SK-N-SH (cell line): ENCODE measurements at regions of chr3 and their contacts with region 1.

Region 1: GRCh38 chr3:146189519-146190173 is 28.7 kb upstream of the PLOD2 start:
- DNase-seq: peak; percentile 40
- H3K4me3 ChIP-seq: no peak overlapping the region
- H3K27ac ChIP-seq: no peak overlapping the region
- H3K4me1 ChIP-seq: no peaks in the 10 kb centered on the region
- H3K27me3 ChIP-seq: no peaks in the 10 kb centered on the region
- CTCF ChIP-seq: peak; percentile 79
- EP300 ChIP-seq: no peak
- RAD21 ChIP-seq: peak; percentile 60

Region 2: GRCh38 chr3:146177519-146177918 is 12.1 kb before region 1 on chr3:
- CTCF ChIA-PET with region 1: interaction called, 13 read pairs
- POLR2A ChIA-PET with region 1: no interaction called
- DNase-seq: no peak
- H3K4me3 ChIP-seq: no peak overlapping the region
- H3K27ac ChIP-seq: no peak overlapping the region
- H3K4me1 ChIP-seq: no peaks in the 10 kb centered on the region
- H3K27me3 ChIP-seq: no peaks in the 10 kb centered on the region; the same call in 1 of the 2 replicates
- CTCF ChIP-seq: no peak
- EP300 ChIP-seq: no peak
- RAD21 ChIP-seq: no peak

Region 3: DNA sequence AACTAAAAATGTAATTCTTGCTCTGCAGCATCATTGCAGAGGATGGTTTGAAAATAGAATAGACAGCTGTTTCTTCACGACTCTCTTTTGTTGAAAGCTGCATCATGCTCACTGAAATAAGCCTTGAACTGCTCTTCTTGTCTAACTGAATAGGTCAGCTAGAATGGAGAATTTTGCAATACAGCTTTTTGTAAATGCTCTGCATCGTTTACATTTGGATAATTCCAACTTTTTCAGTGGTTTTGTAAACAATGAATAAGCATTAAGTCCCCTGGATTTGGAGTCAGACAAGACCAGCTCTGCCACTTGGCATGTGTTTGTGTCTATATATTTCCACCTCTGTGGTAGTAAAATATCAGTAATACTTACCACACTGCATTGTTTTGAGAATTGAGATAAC is 184.5 kb after region 1 on chr3:
- CTCF ChIA-PET with region 1: no interaction called
- POLR2A ChIA-PET with region 1: no interaction called
- DNase-seq: no peak
- H3K4me3 ChIP-seq: no peak overlapping the region
- H3K27ac ChIP-seq: no peak overlapping the region
- H3K4me1 ChIP-seq: no peaks in the 10 kb centered on the region
- H3K27me3 ChIP-seq: no peaks in the 10 kb centered on the region
- CTCF ChIP-seq: no peak
- EP300 ChIP-seq: no peak
- RAD21 ChIP-seq: no peak

Region 4: DNA sequence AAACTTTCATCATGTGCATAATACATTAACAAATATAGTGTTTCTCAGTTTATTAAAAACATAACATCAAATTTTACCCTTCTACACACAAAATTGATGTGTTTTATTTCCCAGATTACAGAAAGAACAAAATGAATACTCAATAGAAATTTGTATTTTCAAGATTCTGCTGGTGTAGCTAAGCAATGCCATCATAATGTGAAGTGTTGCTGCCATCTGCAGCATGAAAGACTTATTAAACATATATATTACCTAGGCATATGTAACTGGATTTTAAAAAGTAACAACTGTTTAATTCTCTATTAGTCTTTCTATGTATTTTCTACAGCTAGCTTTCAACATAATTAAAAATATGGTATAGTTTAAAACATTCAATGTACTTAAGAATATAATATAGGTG is 388.0 kb after region 1 on chr3:
- CTCF ChIA-PET with region 1: interaction called, 10 read pairs
- POLR2A ChIA-PET with region 1: no interaction called
- DNase-seq: peak; percentile 1
- H3K4me3 ChIP-seq: no peak overlapping the region
- H3K27ac ChIP-seq: no peak overlapping the region
- H3K4me1 ChIP-seq: no peaks in the 10 kb centered on the region
- H3K27me3 ChIP-seq: no peaks in the 10 kb centered on the region; the same call in 1 of the 2 replicates
- CTCF ChIP-seq: peak; percentile 69
- EP300 ChIP-seq: no peak
- RAD21 ChIP-seq: peak; percentile 72